Aorta (tissue), 5 donors: ENCODE measurements at regions of chr1 and their contacts with region 1.

Region 1: DNA sequence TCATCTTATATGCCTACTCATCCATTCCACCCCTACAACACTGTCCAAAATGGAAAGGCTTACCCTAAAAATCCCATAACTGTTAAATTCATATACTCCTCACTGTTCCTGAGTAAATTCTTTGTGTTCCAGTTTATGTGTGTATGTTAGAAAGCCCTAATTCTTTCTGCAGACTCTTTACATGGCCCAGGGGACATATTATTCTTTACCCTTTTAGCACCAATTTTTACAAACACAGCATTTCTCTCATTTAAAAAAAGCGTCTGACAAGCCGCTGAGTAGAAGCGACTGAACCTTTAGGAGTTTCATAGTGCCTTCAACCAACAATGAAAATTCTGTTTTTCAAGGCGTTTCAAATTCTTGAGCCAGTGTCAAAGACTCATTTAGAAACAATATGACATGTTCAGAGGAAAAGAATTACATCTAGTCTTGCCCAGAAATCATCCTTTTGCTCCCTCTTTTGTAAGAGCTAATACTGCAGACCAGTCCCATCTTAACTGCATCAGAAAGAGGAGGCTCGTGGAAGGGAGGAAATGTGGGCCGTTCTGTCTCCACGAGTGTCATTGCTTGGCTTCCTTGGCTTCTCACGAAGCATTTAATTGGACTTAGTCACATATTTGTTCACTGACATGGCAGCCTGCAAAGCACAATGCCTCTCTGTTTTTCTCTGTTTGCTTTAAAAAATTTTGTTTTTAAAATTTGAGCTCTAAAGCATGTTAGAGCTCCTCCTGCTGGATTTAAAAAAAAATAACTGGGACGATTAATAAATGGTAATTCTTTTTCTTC is 21.3 kb upstream of the C1orf105 start:
- DNase-seq: peak in 1 of 2 donors; percentile 70
- ATAC-seq: peak; percentile 91
- H3K4me3 ChIP-seq: peak overlapping the region; percentile 1 to 26
- H3K27ac ChIP-seq: peak overlapping the region; percentile 68
- H3K4me1 ChIP-seq: peaks cover 4 to 9% of the 10 kb centered on the region in 2 donors
- H3K27me3 ChIP-seq: no peaks in the 10 kb centered on the region

Region 2: GRCh38 chr1:171965777-171966176 is 433.4 kb before region 1 on chr1:
- intact Hi-C with region 1: no loop called
- DNase-seq: no peak
- ATAC-seq: no peak
- H3K4me3 ChIP-seq: no peak overlapping the region
- H3K27ac ChIP-seq: no peak overlapping the region
- H3K4me1 ChIP-seq: no peaks in the 10 kb centered on the region
- H3K27me3 ChIP-seq: no peaks in the 10 kb centered on the region

Region 3: DNA sequence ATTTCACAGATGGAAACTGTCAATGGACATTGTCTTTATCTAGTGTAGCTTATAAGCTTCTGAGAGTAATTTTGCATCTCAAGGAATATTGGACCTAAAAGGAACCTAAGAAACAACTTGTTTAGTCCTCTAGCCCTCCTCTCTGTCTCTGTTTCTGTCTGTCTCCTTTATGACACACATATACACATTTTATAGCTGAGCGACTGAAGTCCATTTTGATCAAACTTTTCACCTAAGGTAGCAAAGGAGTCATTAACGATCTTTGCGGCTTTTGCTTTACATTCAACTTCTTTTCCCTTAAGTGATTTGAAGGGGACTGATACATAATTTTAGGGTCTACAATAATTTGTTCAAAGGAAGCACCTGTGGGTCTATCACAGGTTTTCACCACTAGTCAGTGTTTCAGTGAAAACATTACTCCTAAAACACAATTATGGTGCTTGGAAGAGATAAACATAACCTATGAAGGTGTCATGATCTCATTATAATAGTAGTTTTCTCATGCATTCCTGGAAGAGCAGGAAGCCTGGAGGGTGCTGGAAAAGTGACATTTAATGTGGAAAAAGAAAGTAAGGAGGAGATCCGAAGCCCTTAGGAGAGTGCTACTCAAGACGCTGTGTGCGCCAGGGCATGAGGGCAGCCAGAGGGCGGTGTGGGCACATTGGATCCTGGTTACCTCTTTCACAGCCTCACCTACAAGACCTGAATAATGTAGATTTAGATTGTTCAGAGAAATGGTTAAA is 309.2 kb before region 1 on chr1:
- intact Hi-C with region 1: loop called (anchors 2 kb)
- DNase-seq: peak; percentile 58 to 80
- ATAC-seq: no peak
- H3K4me3 ChIP-seq: no peak overlapping the region
- H3K27ac ChIP-seq: no peak overlapping the region
- H3K4me1 ChIP-seq: no peaks in the 10 kb centered on the region
- H3K27me3 ChIP-seq: no peaks in the 10 kb centered on the region

Region 4: DNA sequence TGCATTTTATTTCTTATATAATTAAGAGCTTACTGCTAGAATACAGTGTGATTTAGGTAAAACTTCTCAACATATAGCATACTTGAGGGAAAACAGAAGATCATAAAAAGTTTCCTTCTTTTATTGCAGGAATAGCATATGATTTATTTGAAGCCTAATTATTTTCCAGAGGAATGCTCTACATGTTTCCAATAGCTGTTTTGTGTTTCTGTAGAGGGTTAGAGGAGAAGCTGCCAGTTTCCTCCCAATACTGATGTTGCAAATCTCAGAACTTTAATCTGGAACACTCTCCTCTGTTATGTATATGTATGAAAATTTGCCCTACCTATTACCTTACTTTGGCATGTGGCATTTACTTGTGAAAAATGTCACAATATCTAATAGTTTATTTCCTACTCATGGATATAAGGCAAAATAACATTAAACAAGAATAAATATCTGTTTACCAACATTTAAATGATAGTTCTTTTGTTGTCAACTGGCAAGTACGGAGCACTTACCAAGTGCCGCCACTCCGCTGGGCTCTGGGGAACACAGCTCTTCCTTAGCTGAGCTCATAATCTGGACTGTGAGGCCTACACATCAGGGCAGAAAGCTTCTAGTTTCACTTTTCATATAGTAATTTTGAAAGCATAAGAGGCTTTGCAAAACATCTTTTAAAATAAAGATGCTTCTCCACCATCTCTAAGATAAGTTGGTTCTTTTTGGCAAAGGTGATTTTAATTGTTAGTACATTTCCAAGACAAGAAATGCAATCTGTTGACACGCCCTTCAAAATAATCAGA is 218.5 kb before region 1 on chr1:
- intact Hi-C with region 1: loop called in 1 of 2 experiments (anchors 2 kb)
- DNase-seq: peak; percentile 71 to 76
- ATAC-seq: peak; percentile 82
- H3K4me3 ChIP-seq: peak overlapping the region; percentile 14 to 59
- H3K27ac ChIP-seq: peak overlapping the region; percentile 63 to 93
- H3K4me1 ChIP-seq: peaks cover 0 to 3% of the 10 kb centered on the region in 2 donors
- H3K27me3 ChIP-seq: no peaks in the 10 kb centered on the region

Region 5: GRCh38 chr1:172254521-172255222 is 144.5 kb before region 1 on chr1:
- intact Hi-C with region 1: loop called in 1 of 2 experiments (anchors 5 kb)
- DNase-seq: no peak
- ATAC-seq: no peak
- H3K4me3 ChIP-seq: peak overlapping the region in 1 of 2 donors; percentile 26
- H3K27ac ChIP-seq: peak overlapping the region in 1 of 2 donors; percentile 72
- H3K4me1 ChIP-seq: no peaks in the 10 kb centered on the region
- H3K27me3 ChIP-seq: no peaks in the 10 kb centered on the region